Psoas muscle (tissue), 8 donors: ENCODE measurements at regions of chr10 and their contacts with region 1.

Region 1: DNA sequence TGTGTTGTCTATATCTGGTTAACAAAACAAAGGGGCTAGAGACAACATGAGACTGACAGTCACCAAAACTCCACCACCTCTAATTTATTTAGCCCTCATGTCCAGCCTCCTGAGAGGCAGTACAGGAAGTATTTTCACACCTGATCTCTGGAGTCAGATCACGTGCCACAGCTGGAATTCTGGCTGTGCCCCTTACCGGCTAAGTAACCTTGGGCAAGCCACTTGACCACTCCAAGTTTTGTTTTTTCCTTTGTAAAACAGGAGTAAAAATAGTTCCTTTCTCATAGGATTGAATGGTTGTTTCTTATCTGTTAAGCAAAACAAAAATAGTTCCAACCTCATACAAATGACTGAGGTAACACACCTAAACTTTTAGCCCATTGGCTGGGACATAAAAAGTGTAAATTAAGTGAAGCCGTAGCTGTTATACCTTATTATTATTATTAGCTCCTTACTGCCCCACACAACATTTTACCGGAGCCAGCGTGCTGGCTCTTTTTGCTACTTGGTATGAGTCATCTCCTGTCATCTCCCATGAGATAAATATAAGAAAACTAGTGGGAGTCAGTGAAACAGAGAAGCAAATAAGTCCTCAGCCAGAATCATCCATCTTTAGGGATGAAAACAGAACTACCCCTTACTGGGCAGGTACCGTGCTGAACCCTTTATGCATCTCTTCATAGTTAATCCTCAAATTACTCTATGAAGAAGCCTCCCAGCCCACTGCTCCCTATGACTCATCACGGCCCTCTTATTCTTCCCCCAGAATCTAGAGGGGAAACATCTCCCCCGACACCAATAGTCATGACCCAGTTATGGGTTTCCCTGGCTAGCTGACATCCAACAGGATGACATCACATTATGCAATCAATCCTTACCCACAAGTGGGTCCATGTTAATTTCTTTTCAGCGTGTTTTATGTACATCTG is 44.9 kb downstream of the PPP1R3C start:
- DNase-seq: peak in 1 of 2 donors; percentile 59
- ATAC-seq: peak; percentile 42 to 61 (median 51)
- H3K4me3 ChIP-seq: peak overlapping the region; percentile 14
- H3K27ac ChIP-seq: peak overlapping the region; percentile 95
- H3K4me1 ChIP-seq: peaks cover 66% of the 10 kb centered on the region
- H3K27me3 ChIP-seq: no peaks in the 10 kb centered on the region
- CTCF ChIP-seq: no peak

Region 2: DNA sequence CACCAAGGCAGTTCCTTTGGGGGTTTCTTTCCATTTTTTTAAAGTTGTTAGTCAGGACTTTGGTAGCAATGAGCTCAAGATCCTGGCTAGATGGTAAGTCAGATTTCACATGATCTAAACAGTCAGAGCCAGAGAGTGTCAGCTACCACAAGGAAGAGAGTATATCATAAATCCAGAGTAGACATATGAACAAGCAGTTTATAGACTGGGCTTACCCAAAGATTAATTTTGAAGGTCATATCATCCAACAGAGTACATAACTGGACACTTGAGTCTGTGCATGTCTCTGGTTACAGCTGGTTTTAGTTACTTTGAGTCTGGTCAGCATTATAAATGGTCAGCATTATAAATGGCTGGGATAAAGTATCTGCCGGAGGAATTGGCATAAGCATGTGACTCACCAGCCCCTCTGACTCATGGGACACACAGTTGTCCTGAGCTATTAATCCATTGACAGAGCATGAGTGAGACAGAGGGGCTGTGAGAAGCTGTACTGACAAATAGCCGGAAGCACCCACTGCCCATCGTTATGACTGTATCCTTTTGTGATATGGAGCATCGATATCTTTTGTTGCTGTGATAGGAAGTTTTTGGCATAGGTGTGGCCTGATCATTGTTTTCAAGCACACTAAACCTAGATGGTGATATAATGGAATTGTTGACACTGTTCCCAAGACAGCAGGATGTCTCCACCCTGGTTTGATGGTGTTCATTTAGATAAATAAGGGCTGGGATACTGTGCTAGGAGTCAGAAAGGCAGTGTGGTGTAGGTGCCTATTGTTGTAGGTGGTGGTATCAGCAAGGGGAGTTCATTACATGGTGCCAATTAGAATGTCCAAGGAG is 25.7 kb after region 1 on chr10:
- intact Hi-C with region 1: loop called in 1 of 2 experiments (anchors 1 kb)
- DNase-seq: peak; percentile 55 to 80
- ATAC-seq: peak; percentile 81 to 91 (median 83)
- H3K4me3 ChIP-seq: peak overlapping the region; percentile 33
- H3K27ac ChIP-seq: peak overlapping the region; percentile 94
- H3K4me1 ChIP-seq: peaks cover 51% of the 10 kb centered on the region
- H3K27me3 ChIP-seq: no peaks in the 10 kb centered on the region
- CTCF ChIP-seq: no peak

Region 3: GRCh38 chr10:91724933-91725332 is 137.0 kb after region 1 on chr10:
- intact Hi-C with region 1: no loop called
- DNase-seq: no peak
- ATAC-seq: no peak
- H3K4me3 ChIP-seq: no peak overlapping the region
- H3K27ac ChIP-seq: no peak overlapping the region
- H3K4me1 ChIP-seq: no peaks in the 10 kb centered on the region
- H3K27me3 ChIP-seq: peaks cover 0 to 16% (median 6%) of the 10 kb centered on the region in 3 donors
- CTCF ChIP-seq: no peak